ENCODE measurements at regions of chr12 and their contacts with region 1.

Region 1: GRCh38 chr12:7142056-7142644 is 12.0 kb downstream of the CLSTN3 start:
- DNase-seq: peak; percentile 74
- H3K4me3 Mint-ChIP-seq: no peak overlapping the region
- H3K27ac Mint-ChIP-seq: no peak overlapping the region
- H3K4me1 Mint-ChIP-seq: peaks cover 3% of the 10 kb centered on the region
- H3K27me3 Mint-ChIP-seq: no peaks in the 10 kb centered on the region

Region 2: DNA sequence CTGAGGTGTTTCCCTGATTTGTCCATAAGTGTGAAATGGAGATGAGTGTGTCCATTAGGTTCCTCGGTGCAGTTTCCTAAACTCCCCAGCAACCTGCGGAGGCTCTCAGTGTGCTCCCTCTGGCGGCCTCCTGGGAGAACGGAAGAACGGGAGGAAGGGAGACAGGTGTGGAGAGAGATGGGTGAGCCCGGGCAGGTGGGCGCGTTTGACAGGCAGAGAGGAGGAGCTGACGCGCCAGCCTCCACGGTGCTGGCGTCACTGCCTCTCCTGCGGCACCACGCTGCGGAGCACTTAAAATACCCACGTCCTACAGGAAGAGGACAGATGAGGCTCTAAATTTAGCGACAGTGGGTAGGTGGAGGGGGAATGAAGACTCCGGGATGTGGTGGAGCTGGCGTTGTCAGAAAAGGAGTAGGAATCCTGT is 20.6 kb after region 1 on chr12:
- CTCF ChIA-PET with region 1: interaction called, 16 read pairs
- DNase-seq: peak; percentile 51
- H3K4me3 Mint-ChIP-seq: no peak overlapping the region
- H3K27ac Mint-ChIP-seq: peak overlapping the region; percentile 6
- H3K4me1 Mint-ChIP-seq: peaks cover 8% of the 10 kb centered on the region
- H3K27me3 Mint-ChIP-seq: peaks cover 34% of the 10 kb centered on the region

Measured in activated naive CD4-positive, alpha-beta T cell treated with anti-CD3 and anti-CD28 coated beads, Interleukin-2, amount 10 ng/mL, durations not matched to agents 7 days and 5 days (primary cell).